Vagina (tissue), 2 donors: ENCODE measurements at regions of chr7 and their contacts with region 1.

Region 1: DNA sequence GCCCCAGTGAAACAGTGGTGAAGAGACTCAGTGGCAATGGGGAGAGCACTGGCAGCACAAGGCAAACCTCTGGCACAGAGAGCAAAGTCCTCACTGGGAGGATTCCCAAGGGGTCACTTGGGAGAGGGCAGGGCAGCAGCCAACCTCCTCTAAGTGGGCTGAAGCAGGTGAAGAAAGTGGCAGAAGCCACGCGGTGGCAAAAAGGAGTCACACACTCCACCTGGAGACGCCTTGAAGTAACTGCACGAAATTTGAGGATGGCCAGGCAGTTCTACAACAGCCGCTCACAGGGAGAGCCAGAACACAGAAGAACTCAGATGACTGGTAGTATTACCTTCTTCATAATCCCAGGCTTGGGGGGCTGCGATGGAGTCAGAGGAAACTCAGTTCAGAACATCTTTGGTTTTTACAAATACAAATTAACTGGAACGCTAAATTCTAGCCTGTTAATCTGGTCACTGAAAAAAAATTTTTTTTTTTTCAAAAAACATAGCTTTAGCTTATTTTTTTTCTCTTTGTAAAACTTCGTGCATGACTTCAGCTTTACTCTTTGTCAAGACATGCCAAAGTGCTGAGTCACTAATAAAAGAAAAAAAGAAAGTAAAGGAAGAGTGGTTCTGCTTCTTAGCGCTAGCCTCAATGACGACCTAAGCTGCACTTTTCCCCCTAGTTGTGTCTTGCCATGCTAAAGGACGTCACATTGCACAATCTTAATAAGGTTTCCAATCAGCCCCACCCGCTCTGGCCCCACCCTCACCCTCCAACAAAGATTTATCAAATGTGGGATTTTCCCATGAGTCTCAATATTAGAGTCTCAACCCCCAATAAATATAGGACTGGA is 435 bp upstream of the IL6 start:
- DNase-seq: peak in 1 of 2 donors; percentile 90
- H3K4me3 ChIP-seq: peak overlapping the region; percentile 35 to 37
- H3K27ac ChIP-seq: peak overlapping the region; percentile 67
- H3K4me1 ChIP-seq: peaks cover 10% of the 10 kb centered on the region
- H3K27me3 ChIP-seq: no peaks in the 10 kb centered on the region
- CTCF ChIP-seq: peak in 1 of 3 experiments; percentile 46
- POLR2A ChIP-seq: no peak

Region 2: GRCh38 chr7:22559829-22560489 is 166.6 kb before region 1 on chr7:
- intact Hi-C with region 1: no loop called
- DNase-seq: peak in 1 of 2 donors; percentile 81
- H3K4me3 ChIP-seq: no peak overlapping the region
- H3K27ac ChIP-seq: no peak overlapping the region
- H3K4me1 ChIP-seq: peaks cover 21% of the 10 kb centered on the region
- H3K27me3 ChIP-seq: no peaks in the 10 kb centered on the region
- CTCF ChIP-seq: peak; percentile 60 to 91 (median 81)
- POLR2A ChIP-seq: no peak

Region 3: GRCh38 chr7:22577396-22578001 is 149.1 kb before region 1 on chr7:
- intact Hi-C with region 1: loop called (anchors 5 kb)
- DNase-seq: peak in 1 of 2 donors; percentile 94
- H3K4me3 ChIP-seq: no peak overlapping the region
- H3K27ac ChIP-seq: peak overlapping the region; percentile 59
- H3K4me1 ChIP-seq: peaks cover 22% of the 10 kb centered on the region
- H3K27me3 ChIP-seq: peaks cover 3% of the 10 kb centered on the region
- CTCF ChIP-seq: no peak
- POLR2A ChIP-seq: no peak

Region 4: GRCh38 chr7:23135755-23136154 is 409.2 kb after region 1 on chr7:
- intact Hi-C with region 1: no loop called
- DNase-seq: no peak
- H3K4me3 ChIP-seq: no peak overlapping the region
- H3K27ac ChIP-seq: no peak overlapping the region
- H3K4me1 ChIP-seq: no peaks in the 10 kb centered on the region
- H3K27me3 ChIP-seq: no peaks in the 10 kb centered on the region
- CTCF ChIP-seq: no peak
- POLR2A ChIP-seq: no peak